Uterus (tissue), 4 donors: ENCODE measurements at regions of chr2 and their contacts with region 1.

Region 1: DNA sequence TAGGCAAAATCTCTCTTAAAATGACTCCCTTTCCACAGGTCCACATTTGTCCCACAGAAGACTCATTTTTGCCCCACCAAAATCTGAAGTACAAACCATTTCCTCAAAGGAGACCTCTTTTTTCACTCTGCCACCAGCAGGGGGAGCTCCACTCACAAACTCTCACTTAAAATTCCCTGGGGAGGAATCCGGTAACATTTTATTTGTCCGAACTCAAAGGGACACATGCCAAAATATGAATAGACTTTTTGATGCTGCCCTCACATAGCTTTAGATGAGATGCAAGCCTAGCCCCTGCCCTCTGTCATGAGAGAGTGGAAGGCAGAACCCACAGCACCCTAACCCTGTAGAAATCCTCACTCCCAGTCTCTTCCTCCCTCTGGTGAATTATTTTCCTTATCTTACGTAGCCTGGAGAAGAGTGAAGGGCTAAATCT is 57.1 kb downstream of the RMDN2 start:
- DNase-seq: peak; percentile 77 to 79
- H3K4me3 ChIP-seq: peak overlapping the region in 1 of 2 donors; percentile 20
- H3K27ac ChIP-seq: peak overlapping the region in 1 of 2 donors; percentile 25
- H3K4me1 ChIP-seq: no peaks in the 10 kb centered on the region
- H3K27me3 ChIP-seq: no peaks in the 10 kb centered on the region
- CTCF ChIP-seq: peak; percentile 73 to 84 (median 79)
- POLR2A ChIP-seq: no peak

Region 2: GRCh38 chr2:37851828-37852584 is 130.2 kb before region 1 on chr2:
- intact Hi-C with region 1: no loop called
- DNase-seq: no peak
- H3K4me3 ChIP-seq: no peak overlapping the region
- H3K27ac ChIP-seq: peak overlapping the region; percentile 54 to 82
- H3K4me1 ChIP-seq: peaks cover 5 to 26% of the 10 kb centered on the region in 2 donors
- H3K27me3 ChIP-seq: no peaks in the 10 kb centered on the region
- CTCF ChIP-seq: no peak
- POLR2A ChIP-seq: no peak

Region 3: GRCh38 chr2:38274286-38275276 is 292.4 kb after region 1 on chr2:
- intact Hi-C with region 1: loop called (anchors 5 kb)
- DNase-seq: peak in 1 of 2 donors; percentile 70
- H3K4me3 ChIP-seq: no peak overlapping the region
- H3K27ac ChIP-seq: no peak overlapping the region
- H3K4me1 ChIP-seq: no peaks in the 10 kb centered on the region
- H3K27me3 ChIP-seq: no peaks in the 10 kb centered on the region
- CTCF ChIP-seq: peak; percentile 61 to 96 (median 88)
- POLR2A ChIP-seq: no peak